Naive thymus-derived CD4-positive, alpha-beta T cell (primary cell): ENCODE measurements at regions of chr21 and their contacts with region 1.

Region 1: DNA sequence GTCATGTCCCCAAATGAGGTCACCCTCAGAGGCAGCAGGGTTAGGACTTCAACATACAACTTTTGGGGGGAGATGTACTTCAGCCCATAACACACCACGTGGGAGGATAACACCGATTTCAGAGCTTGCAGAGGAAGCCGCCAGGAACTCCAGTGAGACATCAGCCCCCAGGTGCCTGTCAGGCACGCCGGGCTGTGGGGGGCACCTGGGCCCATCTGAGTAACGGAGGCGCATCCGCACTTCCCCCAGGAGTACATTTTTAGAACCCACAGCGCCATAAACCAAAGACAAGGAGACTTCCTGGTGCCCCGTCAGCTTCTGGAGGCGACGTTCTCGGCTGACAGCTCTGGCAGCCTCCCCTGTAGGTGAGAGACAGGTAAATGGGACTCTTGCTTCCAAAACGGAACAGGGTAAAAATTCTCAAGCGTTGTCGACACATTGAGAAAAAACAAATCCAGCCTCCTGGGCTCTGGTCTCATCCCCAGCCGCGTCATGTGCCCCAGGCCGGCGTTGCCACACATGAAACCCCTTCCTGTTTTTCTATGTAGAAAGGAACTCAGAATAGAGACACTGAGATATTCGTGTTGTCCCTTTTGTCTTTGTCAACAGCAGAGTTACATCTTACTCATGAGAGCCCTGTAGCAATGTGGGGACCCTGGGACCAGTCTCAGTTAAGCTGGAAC is 93.3 kb downstream of the PDE9A start:
- DNase-seq: peak; percentile 33 to 85 (median 77)
- ATAC-seq: peak; percentile 90
- H3K4me3 ChIP-seq: peak overlapping the region; percentile 36
- H3K4me3 Mint-ChIP-seq: peak overlapping the region; percentile 72 to 90 (median 80)
- H3K27ac ChIP-seq: peak overlapping the region; percentile 63
- H3K27ac Mint-ChIP-seq: peak overlapping the region; percentile 96 to 100 (median 98)
- H3K4me1 ChIP-seq: peaks cover 19 to 26% of the 10 kb centered on the region in 2 donors
- H3K4me1 Mint-ChIP-seq: peaks cover 18 to 46% (median 32%) of the 10 kb centered on the region in 7 donors
- H3K27me3 ChIP-seq: no peaks in the 10 kb centered on the region
- H3K27me3 Mint-ChIP-seq: no peaks in the 10 kb centered on the region

Region 2: DNA sequence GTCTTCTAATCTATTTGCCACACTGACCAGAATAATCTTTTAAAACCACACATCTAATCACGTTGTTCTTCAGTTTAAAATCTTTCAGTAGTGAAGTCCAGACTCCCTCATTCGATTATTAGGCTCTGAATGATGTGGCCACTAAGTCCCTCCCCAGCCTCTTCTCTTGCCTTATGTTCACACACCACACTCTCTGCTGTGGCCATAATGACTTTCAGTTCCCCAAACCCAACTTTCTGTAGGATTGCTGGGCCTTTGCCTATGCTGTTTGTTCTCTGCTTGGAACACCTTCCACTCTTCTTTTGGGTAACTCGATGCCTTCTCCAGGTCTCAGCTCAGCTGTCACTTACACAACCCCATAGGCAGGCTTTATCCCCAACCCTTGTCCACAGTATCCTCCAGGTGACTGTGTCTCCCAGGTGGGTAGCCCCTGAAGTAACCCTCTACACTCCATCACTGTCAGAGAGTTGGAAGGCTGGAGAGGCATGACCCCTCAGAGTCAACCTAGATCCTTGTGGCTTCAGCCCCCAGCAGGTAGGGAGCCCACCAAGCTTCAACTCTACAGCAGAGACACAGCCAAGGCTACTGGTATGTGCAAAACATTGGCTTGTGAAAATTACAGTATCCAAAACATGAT is 241.5 kb before region 1 on chr21:
- CTCF ChIA-PET with region 1: interaction called, 10 read pairs
- POLR2A ChIA-PET with region 1: no interaction called
- intact Hi-C with region 1: no loop called
- DNase-seq: peak in 1 of 9 donors; percentile 8
- ATAC-seq: peak; percentile 63
- H3K4me3 ChIP-seq: no peak overlapping the region
- H3K4me3 Mint-ChIP-seq: no peak overlapping the region
- H3K27ac ChIP-seq: no peak overlapping the region
- H3K27ac Mint-ChIP-seq: no peak overlapping the region
- H3K4me1 ChIP-seq: peaks cover 0 to 4% of the 10 kb centered on the region in 2 donors
- H3K4me1 Mint-ChIP-seq: peaks cover 0 to 16% (median 5%) of the 10 kb centered on the region in 7 donors
- H3K27me3 ChIP-seq: no peaks in the 10 kb centered on the region
- H3K27me3 Mint-ChIP-seq: peaks cover 0 to 38% (median 0%) of the 10 kb centered on the region in 5 donors

Region 3: GRCh38 chr21:42652527-42653230 is 94.1 kb before region 1 on chr21:
- CTCF ChIA-PET with region 1: interaction called, 3 read pairs
- POLR2A ChIA-PET with region 1: interaction called, 4 read pairs
- intact Hi-C with region 1: loop called in 1 of 2 experiments (anchors 2 kb)
- DNase-seq: no peak
- ATAC-seq: no peak
- H3K4me3 ChIP-seq: no peak overlapping the region
- H3K4me3 Mint-ChIP-seq: peak overlapping the region; percentile 68 to 88 (median 84)
- H3K27ac ChIP-seq: no peak overlapping the region
- H3K27ac Mint-ChIP-seq: peak overlapping the region in 8 of 9 donors; percentile 1 to 86 (median 68)
- H3K4me1 ChIP-seq: peaks cover 0 to 15% of the 10 kb centered on the region in 2 donors
- H3K4me1 Mint-ChIP-seq: peaks cover 17 to 29% (median 24%) of the 10 kb centered on the region in 7 donors
- H3K27me3 ChIP-seq: peaks cover 0 to 4% of the 10 kb centered on the region in 2 donors
- H3K27me3 Mint-ChIP-seq: peaks cover 0 to 50% (median 0%) of the 10 kb centered on the region in 5 donors

Region 4: DNA sequence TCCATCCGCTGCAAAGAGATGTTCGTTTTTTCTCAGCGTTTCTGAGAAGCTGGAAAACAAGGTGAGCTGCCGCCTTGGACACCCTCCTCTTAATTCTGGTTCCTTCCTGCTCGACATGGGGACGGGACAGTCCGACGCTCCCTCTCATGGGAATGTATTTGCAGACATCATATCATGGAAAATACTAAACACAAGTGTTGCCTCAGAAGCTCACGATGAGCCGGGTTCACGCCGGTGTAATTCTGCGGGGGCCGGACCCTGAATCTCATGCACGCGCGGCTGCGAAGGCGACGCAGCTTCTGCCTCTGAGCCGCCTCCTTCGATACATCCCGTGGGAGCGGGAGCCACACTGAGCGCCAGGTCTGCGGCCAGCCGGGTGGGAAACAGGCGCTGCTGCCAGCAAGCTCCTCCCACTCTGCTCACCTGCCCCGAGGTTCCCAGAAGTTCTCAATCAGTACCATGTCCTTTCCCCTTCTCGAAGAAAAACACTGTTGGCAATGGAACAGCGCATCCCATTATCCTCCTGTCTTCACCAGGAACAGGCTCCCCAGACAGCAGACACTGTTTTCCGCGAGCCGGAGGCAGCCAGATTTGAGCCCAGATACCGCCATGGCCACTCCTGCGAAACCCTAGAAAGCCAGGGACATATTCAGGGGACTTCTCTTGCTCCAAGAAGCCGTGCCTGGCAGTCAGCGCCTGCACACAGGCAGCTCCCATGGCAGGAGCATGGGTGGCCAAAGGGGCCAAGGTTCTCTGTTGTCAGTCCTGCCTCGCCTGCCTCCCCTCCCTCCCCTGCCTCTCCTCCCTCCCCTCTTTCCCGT is 34.6 kb after region 1 on chr21:
- CTCF ChIA-PET with region 1: interaction called, 3 read pairs
- POLR2A ChIA-PET with region 1: interaction called, 37 read pairs
- intact Hi-C with region 1: loop called (anchors 1 to 5 kb)
- DNase-seq: peak in 1 of 9 donors; percentile 11
- ATAC-seq: no peak
- H3K4me3 ChIP-seq: peak overlapping the region; percentile 30
- H3K4me3 Mint-ChIP-seq: peak overlapping the region; percentile 40 to 92 (median 80)
- H3K27ac ChIP-seq: peak overlapping the region; percentile 7
- H3K27ac Mint-ChIP-seq: peak overlapping the region; percentile 31 to 100 (median 87)
- H3K4me1 ChIP-seq: peaks cover 14 to 44% of the 10 kb centered on the region in 2 donors
- H3K4me1 Mint-ChIP-seq: peaks cover 35 to 65% (median 48%) of the 10 kb centered on the region in 7 donors
- H3K27me3 ChIP-seq: no peaks in the 10 kb centered on the region
- H3K27me3 Mint-ChIP-seq: peaks cover 0 to 37% (median 0%) of the 10 kb centered on the region in 5 donors

Region 5: GRCh38 chr21:43012595-43012994 is 265.9 kb after region 1 on chr21:
- CTCF ChIA-PET with region 1: no interaction called
- POLR2A ChIA-PET with region 1: no interaction called
- intact Hi-C with region 1: no loop called
- DNase-seq: no peak
- ATAC-seq: no peak
- H3K4me3 ChIP-seq: no peak overlapping the region
- H3K4me3 Mint-ChIP-seq: no peak overlapping the region
- H3K27ac ChIP-seq: no peak overlapping the region
- H3K27ac Mint-ChIP-seq: peak overlapping the region in 1 of 9 donors; percentile 46
- H3K4me1 ChIP-seq: no peaks in the 10 kb centered on the region
- H3K4me1 Mint-ChIP-seq: peaks cover 0 to 8% (median 0%) of the 10 kb centered on the region in 7 donors
- H3K27me3 ChIP-seq: no peaks in the 10 kb centered on the region
- H3K27me3 Mint-ChIP-seq: no peaks in the 10 kb centered on the region